IMR-90 (cell line): ENCODE measurements at regions of chr10 and their contacts with region 1.

Region 1: DNA sequence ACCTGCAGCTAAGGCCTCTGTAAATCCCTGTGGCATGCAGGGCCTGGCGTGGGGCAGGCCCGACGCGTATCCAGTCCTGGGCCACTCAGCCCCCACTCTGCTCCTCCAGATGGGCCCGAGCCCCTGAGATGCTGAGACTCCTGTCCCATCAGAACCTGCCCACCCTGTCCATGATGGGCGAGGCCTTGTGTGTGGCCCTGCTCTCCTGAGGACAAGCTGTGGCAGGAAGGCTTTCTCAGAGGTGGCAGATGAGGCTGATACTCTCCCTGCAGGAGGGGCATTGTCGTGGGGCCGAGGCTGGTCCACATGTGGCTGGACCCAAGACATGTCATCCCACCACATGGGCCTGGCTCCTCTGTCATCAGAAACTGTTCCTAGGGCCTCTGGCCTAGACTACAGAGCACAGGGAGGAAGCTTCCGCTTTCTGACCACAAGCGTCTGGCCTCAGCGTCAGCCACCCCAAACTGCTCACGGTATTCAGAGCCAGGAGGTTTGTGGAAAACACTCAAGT is 6.0 kb downstream of the ALOX5 start:
- DNase-seq: no peak
- ATAC-seq: no peak
- H3K4me3 ChIP-seq: no peak overlapping the region
- H3K27ac ChIP-seq: no peak overlapping the region
- H3K4me1 ChIP-seq: no peaks in the 10 kb centered on the region
- H3K27me3 ChIP-seq: peaks cover 14% of the 10 kb centered on the region
- CTCF ChIP-seq: no peak
- POLR2A ChIP-seq: no peak
- RAD21 ChIP-seq: no peak

Region 2: GRCh38 chr10:45278860-45279498 is 101.0 kb before region 1 on chr10:
- CTCF ChIA-PET with region 1: no interaction called
- POLR2A ChIA-PET with region 1: no interaction called
- dilution Hi-C with region 1: no loop called
- in situ Hi-C with region 1: no loop called
- intact Hi-C with region 1: loop called (anchors 10 kb)
- DNase-seq: no peak
- ATAC-seq: no peak
- H3K4me3 ChIP-seq: no peak overlapping the region
- H3K27ac ChIP-seq: no peak overlapping the region
- H3K4me1 ChIP-seq: no peaks in the 10 kb centered on the region
- H3K27me3 ChIP-seq: peaks cover 7% of the 10 kb centered on the region
- CTCF ChIP-seq: no peak
- POLR2A ChIP-seq: no peak
- RAD21 ChIP-seq: no peak

Region 3: GRCh38 chr10:45580371-45581215 is 200.6 kb after region 1 on chr10:
- CTCF ChIA-PET with region 1: no interaction called
- POLR2A ChIA-PET with region 1: no interaction called
- dilution Hi-C with region 1: no loop called
- in situ Hi-C with region 1: no loop called
- intact Hi-C with region 1: no loop called
- DNase-seq: no peak
- ATAC-seq: no peak
- H3K4me3 ChIP-seq: no peak overlapping the region
- H3K27ac ChIP-seq: no peak overlapping the region
- H3K4me1 ChIP-seq: no peaks in the 10 kb centered on the region
- H3K27me3 ChIP-seq: no peaks in the 10 kb centered on the region
- CTCF ChIP-seq: no peak
- POLR2A ChIP-seq: no peak
- RAD21 ChIP-seq: no peak